Activated B cell treated with CpG ODN at 0.5 μM for 24 hours (primary cell): ENCODE measurements at regions of chr7 and their contacts with region 1.

Region 1: DNA sequence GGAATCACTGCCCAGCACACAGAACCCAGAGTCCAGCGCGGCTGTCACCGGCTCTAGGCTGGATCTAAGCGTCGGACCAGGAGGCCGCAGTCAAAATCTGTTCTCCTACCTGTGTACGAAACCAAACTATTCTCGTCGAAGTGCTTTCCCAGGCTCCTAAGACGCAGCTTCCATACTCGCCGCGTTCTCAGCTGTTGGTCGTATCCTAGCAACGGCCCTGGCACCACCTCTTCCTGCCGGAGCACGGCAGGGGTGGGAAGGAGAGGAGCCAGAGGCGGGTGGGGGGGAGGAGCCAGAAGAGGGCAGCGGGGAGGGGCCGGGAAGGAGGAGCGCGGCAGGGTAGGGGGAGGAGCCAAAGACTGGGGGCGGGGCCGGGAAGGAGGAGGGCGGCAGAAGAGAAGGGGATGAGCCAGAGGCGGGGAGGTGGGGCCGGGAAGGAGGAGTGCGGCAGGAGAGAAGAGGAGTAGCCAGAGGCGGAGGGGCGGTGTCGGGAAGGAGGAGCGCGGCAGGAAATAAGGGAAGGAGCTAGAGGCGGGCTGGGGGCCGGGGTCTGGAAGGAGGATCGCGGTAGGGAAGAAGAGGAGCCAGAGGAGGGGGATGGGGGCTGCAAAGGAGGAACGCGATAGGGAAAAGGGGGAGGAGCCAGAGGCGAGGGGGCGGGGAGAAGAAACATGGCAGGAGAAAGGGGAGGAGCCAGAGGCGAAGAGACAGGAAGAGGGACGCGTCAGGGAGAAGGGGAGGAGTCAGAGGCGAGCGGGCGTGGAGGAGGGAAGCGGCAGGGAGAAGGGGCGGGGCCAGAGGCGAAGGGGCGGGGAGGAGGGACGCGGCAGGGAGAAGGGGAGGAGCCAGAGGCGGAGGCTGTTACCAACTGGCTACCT is at the start of gene IQUB:
- DNase-seq: peak; percentile 86
- ATAC-seq: peak; percentile 88
- H3K4me3 Mint-ChIP-seq: peak within 1 kb of the TSS; percentile 94
- H3K27ac Mint-ChIP-seq: peak within 1 kb of the TSS; percentile 66
- H3K4me1 Mint-ChIP-seq: peaks cover 20% of the 10 kb centered on the region
- H3K27me3 Mint-ChIP-seq: peaks cover 9% of the 10 kb centered on the region
- CTCF ChIP-seq: no peak
- total RNA-seq, gene IQUB: 0.11 and 0.15 TPM in 2 replicates

Region 2: GRCh38 chr7:122143751-122144711 is 1390.6 kb before region 1 on chr7 and contains the start of gene AASS:
- CTCF ChIA-PET with region 1: no interaction called
- POLR2A ChIA-PET with region 1: interaction called, 4 read pairs
- intact Hi-C with region 1: loop called (anchors 10 kb)
- DNase-seq: peak; percentile 78
- ATAC-seq: peak; percentile 98
- H3K4me3 Mint-ChIP-seq: peak within 1 kb of the TSS; percentile 96
- H3K27ac Mint-ChIP-seq: peak within 1 kb of the TSS; percentile 80
- H3K4me1 Mint-ChIP-seq: peaks cover 14% of the 10 kb centered on the region
- H3K27me3 Mint-ChIP-seq: peaks cover 8% of the 10 kb centered on the region
- CTCF ChIP-seq: no peak
- total RNA-seq, gene AASS: 5.9 and 6.3 TPM in 2 replicates

Region 3: DNA sequence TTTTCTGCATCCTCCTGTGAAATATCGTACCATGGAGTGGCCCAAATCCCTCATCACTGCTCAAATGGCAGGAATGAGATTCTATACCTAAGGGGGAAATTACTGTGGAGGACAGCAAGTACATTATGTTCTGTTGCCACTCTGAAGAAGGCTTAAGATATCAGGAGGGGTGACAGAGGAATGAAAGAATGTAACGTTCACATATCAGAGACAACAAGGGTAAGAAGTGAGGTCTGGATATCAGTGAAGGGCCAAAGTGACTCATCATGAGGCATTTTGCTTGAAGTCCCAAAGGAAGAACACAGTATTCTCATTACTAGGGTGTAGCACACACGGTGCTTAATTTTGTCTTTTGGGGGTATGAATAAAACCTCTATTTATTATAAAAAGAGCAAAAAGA is 263.4 kb before region 1 on chr7:
- CTCF ChIA-PET with region 1: no interaction called
- POLR2A ChIA-PET with region 1: no interaction called
- intact Hi-C with region 1: no loop called
- DNase-seq: no peak
- ATAC-seq: no peak
- H3K4me3 Mint-ChIP-seq: no peak overlapping the region
- H3K27ac Mint-ChIP-seq: no peak overlapping the region
- H3K4me1 Mint-ChIP-seq: no peaks in the 10 kb centered on the region
- H3K27me3 Mint-ChIP-seq: no peaks in the 10 kb centered on the region
- CTCF ChIP-seq: no peak

Region 4: GRCh38 chr7:123494193-123494796 is 40.3 kb before region 1 on chr7:
- CTCF ChIA-PET with region 1: interaction called, 11 read pairs
- POLR2A ChIA-PET with region 1: no interaction called
- intact Hi-C with region 1: loop called (anchors 1 kb)
- DNase-seq: no peak
- ATAC-seq: peak; percentile 37
- H3K4me3 Mint-ChIP-seq: no peak overlapping the region
- H3K27ac Mint-ChIP-seq: no peak overlapping the region
- H3K4me1 Mint-ChIP-seq: peaks cover 2% of the 10 kb centered on the region
- H3K27me3 Mint-ChIP-seq: peaks cover 11% of the 10 kb centered on the region
- CTCF ChIP-seq: peak; percentile 90

Region 5: GRCh38 chr7:123548406-123548805 is 13.8 kb after region 1 on chr7:
- CTCF ChIA-PET with region 1: interaction called, 5 read pairs
- POLR2A ChIA-PET with region 1: no interaction called
- intact Hi-C with region 1: loop called (anchors 1 kb)
- DNase-seq: no peak
- ATAC-seq: no peak
- H3K4me3 Mint-ChIP-seq: no peak overlapping the region
- H3K27ac Mint-ChIP-seq: no peak overlapping the region
- H3K4me1 Mint-ChIP-seq: peaks cover 9% of the 10 kb centered on the region
- H3K27me3 Mint-ChIP-seq: no peaks in the 10 kb centered on the region
- CTCF ChIP-seq: no peak

Region 6: DNA sequence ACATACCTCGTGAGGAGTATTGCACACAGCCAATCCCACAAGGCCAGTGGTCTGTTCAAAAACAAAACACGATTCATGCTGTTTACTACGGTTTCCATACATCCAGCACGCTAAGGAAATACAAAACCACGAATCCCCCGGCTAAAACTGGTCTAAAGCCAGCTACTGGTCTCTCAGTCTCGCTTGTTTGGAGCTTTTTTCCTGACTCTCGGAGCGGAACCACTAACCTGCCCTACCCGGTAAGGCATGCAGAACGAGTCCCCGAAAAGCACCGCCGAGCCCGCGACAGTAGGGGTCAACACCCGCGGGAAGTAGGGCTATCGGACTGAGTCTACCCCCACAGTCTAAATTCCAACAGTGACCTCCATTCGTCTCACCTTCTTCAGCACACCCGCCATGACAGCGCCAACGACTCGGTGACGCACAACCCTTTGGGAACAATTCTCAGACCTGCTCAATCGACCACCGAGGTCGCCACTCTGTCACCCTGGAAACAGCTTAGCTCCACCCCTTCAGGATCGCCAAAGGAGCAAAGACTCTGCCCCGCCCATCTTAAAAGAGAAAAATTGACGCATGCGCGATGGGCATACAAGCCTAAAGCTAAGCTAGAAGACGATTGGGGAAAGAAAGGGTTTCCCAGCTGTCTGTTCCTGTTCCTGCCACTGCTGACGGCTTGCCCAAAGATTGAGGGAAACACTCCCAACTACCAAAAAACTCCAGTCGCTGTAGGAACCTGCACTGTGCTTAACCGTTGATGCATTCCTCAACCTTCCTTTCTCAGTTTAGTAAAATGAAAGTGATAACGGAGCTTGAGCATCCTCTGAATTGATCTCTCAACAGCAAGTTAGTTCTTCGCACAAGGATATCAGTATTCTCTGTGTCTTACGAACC is 23.0 kb after region 1 on chr7 and contains the start of gene NDUFA5:
- CTCF ChIA-PET with region 1: interaction called, 4 read pairs
- POLR2A ChIA-PET with region 1: interaction called, 24 read pairs
- intact Hi-C with region 1: loop called (anchors 1 kb)
- DNase-seq: peak; percentile 80
- ATAC-seq: peak; percentile 97
- H3K4me3 Mint-ChIP-seq: no peak within 1 kb of the TSS
- H3K27ac Mint-ChIP-seq: no peak within 1 kb of the TSS
- H3K4me1 Mint-ChIP-seq: peaks cover 10% of the 10 kb centered on the region
- H3K27me3 Mint-ChIP-seq: peaks cover 10% of the 10 kb centered on the region
- CTCF ChIP-seq: no peak
- total RNA-seq, gene NDUFA5: 54.3 and 63.8 TPM in 2 replicates

Region 7: GRCh38 chr7:123594813-123595241 is 60.2 kb after region 1 on chr7:
- CTCF ChIA-PET with region 1: no interaction called
- POLR2A ChIA-PET with region 1: no interaction called
- intact Hi-C with region 1: no loop called
- DNase-seq: no peak
- ATAC-seq: no peak
- H3K4me3 Mint-ChIP-seq: no peak overlapping the region
- H3K27ac Mint-ChIP-seq: no peak overlapping the region
- H3K4me1 Mint-ChIP-seq: no peaks in the 10 kb centered on the region
- H3K27me3 Mint-ChIP-seq: peaks cover 27% of the 10 kb centered on the region
- CTCF ChIP-seq: no peak

Region 8: DNA sequence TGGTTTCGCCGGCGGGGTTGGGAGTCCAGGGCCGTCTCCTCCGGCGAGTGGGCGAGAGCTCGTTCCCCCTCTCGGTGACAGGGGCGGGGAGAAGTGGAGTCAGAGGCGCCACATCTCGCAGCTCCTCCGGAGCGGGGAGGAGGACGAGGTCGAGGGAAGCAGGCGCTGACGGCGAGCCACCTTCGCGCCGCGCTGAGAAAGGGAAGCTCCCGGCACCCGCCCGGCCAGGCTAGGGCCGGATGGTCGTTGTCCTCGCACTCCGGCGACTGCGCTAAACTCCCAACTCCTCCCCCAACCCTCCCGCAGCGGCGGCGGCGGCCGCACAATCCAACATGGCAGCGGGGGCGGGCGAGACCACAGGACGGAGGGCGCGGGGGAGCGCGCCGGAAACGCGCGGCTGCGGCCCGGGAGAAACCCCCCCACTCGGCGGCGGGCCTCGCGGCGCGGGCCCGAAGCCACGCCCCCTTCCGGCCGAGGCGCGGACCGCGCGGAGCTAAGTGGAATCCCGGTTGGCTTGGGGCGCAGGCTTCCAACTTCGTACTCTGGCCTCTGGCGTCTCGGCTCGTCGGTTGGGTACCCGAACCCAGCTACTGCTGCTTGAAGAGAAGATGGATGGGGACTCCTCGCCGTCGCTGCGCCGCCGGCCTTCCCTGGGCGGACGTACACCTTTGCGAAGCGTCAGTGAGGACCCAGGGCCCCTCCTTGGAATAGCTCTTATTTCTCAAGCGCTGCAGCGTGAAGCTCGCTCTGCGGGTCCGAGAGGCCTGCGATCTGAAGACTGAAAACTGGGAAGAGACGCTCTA is 214.3 kb after region 1 on chr7 and contains the start of gene WASL:
- CTCF ChIA-PET with region 1: no interaction called
- POLR2A ChIA-PET with region 1: interaction called, 3 read pairs
- intact Hi-C with region 1: loop called (anchors 1 kb)
- DNase-seq: peak; percentile 89
- ATAC-seq: peak; percentile 85
- H3K4me3 Mint-ChIP-seq: peak within 1 kb of the TSS; percentile 93
- H3K27ac Mint-ChIP-seq: peak within 1 kb of the TSS; percentile 93
- H3K4me1 Mint-ChIP-seq: peaks cover 54% of the 10 kb centered on the region
- H3K27me3 Mint-ChIP-seq: no peaks in the 10 kb centered on the region
- CTCF ChIP-seq: no peak
- total RNA-seq, gene WASL: 5.5 and 6.9 TPM in 2 replicates

Region 9: GRCh38 chr7:124662937-124663336 is 1128.3 kb after region 1 on chr7:
- CTCF ChIA-PET with region 1: no interaction called
- POLR2A ChIA-PET with region 1: no interaction called
- intact Hi-C with region 1: no loop called
- DNase-seq: no peak
- ATAC-seq: no peak
- H3K4me3 Mint-ChIP-seq: no peak overlapping the region
- H3K27ac Mint-ChIP-seq: no peak overlapping the region
- H3K4me1 Mint-ChIP-seq: no peaks in the 10 kb centered on the region
- H3K27me3 Mint-ChIP-seq: no peaks in the 10 kb centered on the region
- CTCF ChIP-seq: no peak

Region 10: GRCh38 chr7:124929467-124930172 is 1395.0 kb after region 1 on chr7 and contains the start of gene POT1:
- CTCF ChIA-PET with region 1: no interaction called
- POLR2A ChIA-PET with region 1: no interaction called
- intact Hi-C with region 1: loop called (anchors 1 kb)
- DNase-seq: peak; percentile 89
- ATAC-seq: peak; percentile 98
- H3K4me3 Mint-ChIP-seq: peak within 1 kb of the TSS; percentile 97
- H3K27ac Mint-ChIP-seq: peak within 1 kb of the TSS; percentile 89
- H3K4me1 Mint-ChIP-seq: peaks cover 26% of the 10 kb centered on the region
- H3K27me3 Mint-ChIP-seq: no peaks in the 10 kb centered on the region
- CTCF ChIP-seq: no peak
- total RNA-seq, gene POT1: 23.4 and 26.8 TPM in 2 replicates